ENCODE measurements at regions of chr14 and their contacts with region 1.

Region 1: DNA sequence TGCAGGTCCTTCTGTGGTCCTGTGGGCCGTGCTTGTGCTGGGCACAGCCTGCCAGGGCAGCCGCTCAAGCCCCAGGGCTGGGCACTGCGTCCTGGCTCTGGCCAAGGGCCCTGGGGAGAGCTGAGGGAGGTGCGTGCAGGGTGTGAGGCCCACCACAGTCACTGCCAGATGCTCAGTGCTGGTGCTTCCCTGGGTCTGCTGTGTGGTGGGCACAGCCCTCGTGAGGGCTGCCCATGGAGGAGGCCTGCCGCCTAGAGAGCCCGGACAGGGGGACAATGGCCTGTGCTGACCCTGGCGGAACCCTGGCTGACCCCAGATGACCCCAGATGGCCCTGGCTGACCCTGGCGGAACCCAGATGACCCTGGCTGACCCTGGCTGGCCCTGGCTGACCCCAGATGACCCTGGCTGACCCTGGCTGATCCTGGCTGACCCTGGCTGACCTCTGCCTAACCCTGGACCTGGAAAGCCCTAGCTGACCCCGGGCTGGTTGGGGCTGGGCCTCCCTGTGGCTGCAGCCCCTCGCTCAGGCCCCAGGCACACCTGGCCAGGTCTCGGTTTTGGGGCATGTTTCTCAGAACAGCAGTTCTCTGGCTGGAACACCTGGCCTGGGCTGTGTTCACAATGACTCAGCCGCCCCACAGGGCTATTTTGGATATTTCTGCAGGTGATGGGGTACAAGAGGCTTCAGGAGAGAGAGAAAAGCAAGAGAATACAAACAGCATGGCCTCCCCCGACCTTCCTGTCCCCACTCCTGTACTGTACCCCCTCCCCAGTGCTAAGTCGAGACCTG is 55.4 kb downstream of the TMEM121 start:
- DNase-seq: no peak
- ATAC-seq: no peak
- H3K4me3 ChIP-seq: no peak overlapping the region
- H3K27ac ChIP-seq: no peak overlapping the region
- H3K4me1 ChIP-seq: no peaks in the 10 kb centered on the region
- H3K27me3 ChIP-seq: no peaks in the 10 kb centered on the region
- CTCF ChIP-seq: no peak

Region 2: DNA sequence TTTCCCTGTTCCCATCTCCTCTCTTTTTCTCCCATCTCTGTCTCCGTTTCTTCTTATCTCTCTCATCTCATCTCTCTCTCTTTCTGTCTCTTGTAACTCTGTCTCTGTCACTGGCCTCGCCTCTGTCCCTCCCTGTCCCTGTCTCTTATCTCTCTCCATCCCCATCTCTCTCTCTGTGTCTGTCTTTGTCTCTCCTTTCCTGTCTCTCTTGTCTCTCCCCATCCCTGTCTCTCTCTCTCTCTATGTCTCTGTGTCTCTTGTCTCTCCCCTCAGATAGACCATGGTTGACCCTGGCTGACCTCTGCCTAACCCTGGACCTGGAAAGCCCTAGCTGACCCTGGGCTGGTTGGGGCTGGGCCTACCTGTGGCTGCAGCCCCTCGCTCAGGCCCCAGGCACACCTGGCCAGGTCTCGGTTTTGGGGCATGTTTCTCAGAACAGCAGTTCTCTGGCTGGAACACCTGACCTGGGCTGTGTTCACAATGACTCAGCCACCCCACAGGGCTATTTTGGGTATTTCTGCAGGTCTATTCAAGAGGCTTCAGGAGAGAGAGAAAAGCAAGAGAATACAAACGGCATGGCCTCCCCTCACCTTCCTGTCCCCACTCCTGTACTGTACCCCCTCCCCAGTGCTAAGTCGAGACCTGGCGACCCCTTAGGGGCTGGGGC is 119.0 kb after region 1 on chr14:
- intact Hi-C with region 1: loop called (anchors 10 kb)
- DNase-seq: no peak
- ATAC-seq: no peak
- H3K4me3 ChIP-seq: no peak overlapping the region
- H3K27ac ChIP-seq: no peak overlapping the region
- H3K4me1 ChIP-seq: no peaks in the 10 kb centered on the region
- H3K27me3 ChIP-seq: no peaks in the 10 kb centered on the region
- CTCF ChIP-seq: no peak